ENCODE measurements at regions of chr10 and their contacts with region 1.

Region 1: DNA sequence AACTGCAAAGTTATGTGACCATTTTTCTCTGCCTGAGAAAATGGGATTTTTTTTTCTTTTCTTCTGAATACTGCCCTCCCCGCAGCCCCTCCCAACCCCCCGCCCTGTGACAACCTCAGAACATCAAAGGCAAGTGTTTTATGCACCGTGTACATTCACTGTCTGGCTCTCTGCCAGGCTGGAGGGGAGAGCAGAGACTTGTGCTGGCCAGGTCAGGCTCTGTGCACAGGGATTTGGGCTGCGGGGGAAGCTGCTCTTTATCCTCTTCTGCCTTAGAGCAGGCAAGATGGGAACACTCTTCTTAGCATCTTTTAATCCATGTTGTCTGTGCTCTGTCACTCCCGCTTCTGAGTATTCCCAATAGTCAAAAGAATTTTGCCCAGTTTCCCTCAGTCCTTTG is 195.1 kb downstream of the CCSER2 start:
- DNase-seq: no peak
- H3K4me3 ChIP-seq: no peak overlapping the region
- H3K27ac ChIP-seq: no peak overlapping the region
- H3K4me1 ChIP-seq: peaks cover 28% of the 10 kb centered on the region
- H3K27me3 ChIP-seq: no peaks in the 10 kb centered on the region
- CTCF ChIP-seq: no peak

Region 2: DNA sequence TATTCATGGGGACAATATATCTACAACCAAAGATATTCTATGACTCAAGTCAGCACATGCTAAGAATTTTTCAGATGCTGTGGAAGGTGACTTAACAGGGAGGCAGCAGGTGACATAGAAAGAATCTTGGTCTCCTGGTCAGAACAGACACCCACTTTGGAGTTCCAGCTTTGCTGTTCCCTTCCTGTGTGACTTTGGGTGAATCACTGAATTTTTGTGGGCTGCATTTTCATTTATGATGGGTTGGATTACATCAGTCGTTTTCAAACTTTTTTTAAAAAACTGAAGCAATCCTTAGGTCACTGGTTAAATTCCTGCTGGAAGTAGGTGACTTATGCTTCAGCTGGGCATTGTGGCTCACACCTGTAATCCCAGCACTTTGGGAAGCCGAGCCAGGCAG is 253.8 kb before region 1 on chr10:
- CTCF ChIA-PET with region 1: no interaction called
- POLR2A ChIA-PET with region 1: no interaction called
- intact Hi-C with region 1: no loop called
- DNase-seq: peak; percentile 36 to 80
- H3K4me3 ChIP-seq: no peak overlapping the region
- H3K27ac ChIP-seq: peak overlapping the region; percentile 64
- H3K4me1 ChIP-seq: peaks cover 20% of the 10 kb centered on the region
- H3K27me3 ChIP-seq: no peaks in the 10 kb centered on the region
- CTCF ChIP-seq: no peak

Region 3: DNA sequence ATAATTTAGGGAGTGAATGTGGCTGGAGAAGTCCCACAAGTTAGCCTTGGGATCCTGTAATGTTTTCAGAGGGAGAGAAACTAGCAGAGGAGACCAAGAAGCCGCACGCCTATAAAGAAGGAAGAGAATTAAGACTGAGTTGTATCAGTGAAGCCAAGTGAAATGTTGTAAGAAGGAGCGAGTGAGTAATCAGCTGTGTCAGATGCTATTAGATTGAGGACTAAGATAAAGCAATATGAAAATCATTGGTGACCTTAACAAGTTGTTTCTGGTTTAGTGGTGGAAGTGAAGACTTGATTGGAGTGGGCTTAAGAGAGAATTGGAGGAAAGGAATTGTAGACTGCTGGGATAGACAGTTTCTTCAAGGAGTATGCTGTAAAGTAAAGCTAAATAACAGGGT is 186.3 kb before region 1 on chr10:
- CTCF ChIA-PET with region 1: no interaction called
- POLR2A ChIA-PET with region 1: no interaction called
- intact Hi-C with region 1: loop called (anchors 1 kb)
- DNase-seq: peak in 1 of 2 experiments; percentile 67
- H3K4me3 ChIP-seq: no peak overlapping the region
- H3K27ac ChIP-seq: peak overlapping the region; percentile 5; the same call in 1 of the 2 replicates
- H3K4me1 ChIP-seq: peaks cover 25% of the 10 kb centered on the region
- H3K27me3 ChIP-seq: no peaks in the 10 kb centered on the region
- CTCF ChIP-seq: no peak

Region 4: DNA sequence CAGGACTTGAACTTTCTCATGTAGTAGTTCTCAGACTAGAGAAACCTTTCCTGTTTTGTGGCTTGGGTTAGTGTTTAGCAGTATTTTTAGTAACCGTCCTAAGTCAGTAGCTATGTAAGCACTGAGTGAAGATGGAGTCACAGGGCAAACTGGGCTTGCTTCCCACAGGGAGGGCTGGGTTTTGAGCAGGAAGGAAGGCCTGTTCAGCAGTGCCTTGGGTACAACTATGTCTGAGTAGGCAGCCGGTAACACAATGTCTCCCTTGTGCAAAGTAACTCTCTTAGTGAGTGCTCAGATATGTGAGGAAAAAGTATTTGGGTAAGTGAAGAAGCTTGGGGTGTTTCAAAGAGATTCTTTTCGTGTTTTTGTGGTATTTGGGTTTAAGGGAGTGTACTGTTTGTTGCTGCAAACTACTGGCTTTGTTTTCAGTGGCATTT is 98.8 kb before region 1 on chr10:
- CTCF ChIA-PET with region 1: interaction called, 3 read pairs
- POLR2A ChIA-PET with region 1: no interaction called
- intact Hi-C with region 1: loop called (anchors 1 kb)
- DNase-seq: peak; percentile 75 to 81
- H3K4me3 ChIP-seq: no peak overlapping the region
- H3K27ac ChIP-seq: peak overlapping the region; percentile 7
- H3K4me1 ChIP-seq: peaks cover 18% of the 10 kb centered on the region
- H3K27me3 ChIP-seq: no peaks in the 10 kb centered on the region
- CTCF ChIP-seq: no peak

Region 5: GRCh38 chr10:84429926-84430520 is 93.5 kb before region 1 on chr10:
- CTCF ChIA-PET with region 1: interaction called, 3 read pairs
- POLR2A ChIA-PET with region 1: no interaction called
- intact Hi-C with region 1: loop called (anchors 1 kb)
- DNase-seq: peak; percentile 67 to 74
- H3K4me3 ChIP-seq: no peak overlapping the region
- H3K27ac ChIP-seq: no peak overlapping the region
- H3K4me1 ChIP-seq: peaks cover 7% of the 10 kb centered on the region
- H3K27me3 ChIP-seq: no peaks in the 10 kb centered on the region
- CTCF ChIP-seq: peak; percentile 96